Caco-2 (cell line): ENCODE measurements at regions of chr20 and their contacts with region 1.

Region 1: GRCh38 chr20:17327185-17328148 is 100.6 kb downstream of the PCSK2 start:
- DNase-seq: no peak
- H3K4me3 ChIP-seq: no peak overlapping the region
- H3K4me3 Mint-ChIP-seq: no peak overlapping the region
- H3K27ac Mint-ChIP-seq: no peak overlapping the region
- H3K4me1 ChIP-seq: no peaks in the 10 kb centered on the region
- H3K4me1 Mint-ChIP-seq: no peaks in the 10 kb centered on the region
- H3K27me3 ChIP-seq: no peaks in the 10 kb centered on the region; the same call in none of the 2 replicates
- H3K27me3 Mint-ChIP-seq: peaks cover 15% of the 10 kb centered on the region
- CTCF ChIP-seq: no peak

Region 2: DNA sequence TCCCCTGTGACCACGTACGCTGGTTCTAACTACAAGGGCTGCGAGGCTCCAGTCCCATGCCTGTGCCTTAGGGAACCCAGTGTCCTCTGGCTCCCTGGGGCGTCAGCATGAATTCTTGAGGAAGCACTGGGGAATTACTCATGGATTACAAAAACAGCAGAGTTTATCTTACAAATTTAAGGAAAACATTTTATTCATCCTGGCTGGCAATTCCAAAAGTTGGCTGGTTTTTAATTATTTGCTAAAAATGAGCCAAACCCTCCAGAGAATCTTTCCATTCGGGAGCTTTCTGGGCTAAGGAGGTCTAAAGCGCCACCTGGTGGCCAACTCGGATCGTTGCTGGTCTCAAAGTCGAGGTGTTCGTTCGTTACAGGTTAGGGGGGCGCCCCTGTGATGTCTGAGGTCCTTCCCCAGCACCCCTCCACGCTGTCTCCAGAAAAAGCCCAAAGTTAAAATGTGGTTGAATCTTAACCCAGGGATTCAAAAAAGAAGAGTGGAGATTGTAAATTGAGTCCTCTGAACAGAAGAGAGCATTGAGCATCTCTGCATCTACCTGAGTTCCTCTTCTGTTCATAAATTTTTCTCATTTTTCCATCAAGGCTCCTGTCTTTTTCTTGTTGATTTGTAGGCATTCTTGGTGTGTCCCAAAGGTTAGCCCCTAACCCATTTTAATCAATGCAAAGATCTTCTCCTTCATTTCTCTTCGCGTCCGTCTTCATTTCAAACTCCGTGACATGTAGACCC is 104.3 kb after region 1 on chr20:
- CTCF ChIA-PET with region 1: no interaction called
- POLR2A ChIA-PET with region 1: no interaction called
- intact Hi-C with region 1: loop called (anchors 10 kb)
- DNase-seq: peak in 1 of 2 experiments; percentile 69
- H3K4me3 ChIP-seq: no peak overlapping the region
- H3K4me3 Mint-ChIP-seq: no peak overlapping the region
- H3K27ac Mint-ChIP-seq: no peak overlapping the region
- H3K4me1 ChIP-seq: peaks cover 9% of the 10 kb centered on the region
- H3K4me1 Mint-ChIP-seq: peaks cover 15% of the 10 kb centered on the region
- H3K27me3 ChIP-seq: no peaks in the 10 kb centered on the region
- H3K27me3 Mint-ChIP-seq: no peaks in the 10 kb centered on the region
- CTCF ChIP-seq: peak; percentile 88 to 92

Region 3: GRCh38 chr20:17569616-17570346 is 242.3 kb after region 1 on chr20 and contains the start of gene DSTN:
- CTCF ChIA-PET with region 1: no interaction called
- POLR2A ChIA-PET with region 1: no interaction called
- intact Hi-C with region 1: no loop called
- DNase-seq: peak; percentile 99 to 100
- H3K4me3 ChIP-seq: peak within 1 kb of the TSS; percentile 98
- H3K4me3 Mint-ChIP-seq: peak within 1 kb of the TSS; percentile 73
- H3K27ac Mint-ChIP-seq: peak within 1 kb of the TSS; percentile 87
- H3K4me1 ChIP-seq: peaks cover 23% of the 10 kb centered on the region
- H3K4me1 Mint-ChIP-seq: peaks cover 32% of the 10 kb centered on the region
- H3K27me3 ChIP-seq: no peaks in the 10 kb centered on the region
- H3K27me3 Mint-ChIP-seq: no peaks in the 10 kb centered on the region
- CTCF ChIP-seq: no peak
- total RNA-seq, gene DSTN: 313 and 318 TPM in 2 replicates